ENCODE measurements at regions of chr4 and their contacts with region 1.

Region 1: GRCh38 chr4:74133786-74134499 is 24.0 kb upstream of the MTHFD2L start:
- DNase-seq: peak in 1 of 2 donors; percentile 91
- H3K4me3 ChIP-seq: no peak overlapping the region
- H3K27ac ChIP-seq: no peak overlapping the region
- H3K4me1 ChIP-seq: no peaks in the 10 kb centered on the region
- H3K27me3 ChIP-seq: no peaks in the 10 kb centered on the region
- CTCF ChIP-seq: peak; percentile 68 to 82 (median 70)

Region 2: DNA sequence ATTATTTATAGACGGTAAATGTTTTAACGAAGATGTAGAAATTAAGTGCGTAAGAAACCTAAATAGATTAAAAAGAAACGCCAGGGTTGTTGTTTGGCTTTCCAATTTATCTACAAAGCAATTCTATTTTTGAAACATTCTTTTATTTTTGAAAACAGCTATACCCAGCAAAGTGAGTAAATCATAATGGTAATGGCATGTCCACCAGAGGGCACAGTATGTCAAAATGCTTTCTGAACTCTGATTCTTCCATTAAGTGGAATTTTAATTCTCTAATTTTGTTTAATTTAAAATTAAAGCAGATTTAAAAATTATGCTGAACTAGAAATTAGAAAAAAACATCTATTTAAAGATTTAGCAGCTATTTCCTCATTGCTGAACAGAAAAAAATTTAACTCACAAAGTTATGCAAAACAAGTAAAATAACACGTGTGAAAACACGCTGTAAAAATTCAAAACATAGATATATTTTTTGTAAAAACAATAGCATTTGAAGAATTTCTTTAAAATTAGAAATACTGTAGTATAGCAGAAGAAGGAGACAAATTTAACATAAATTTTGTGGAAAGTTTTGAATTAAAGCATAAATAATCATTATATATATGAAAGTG is 540.2 kb before region 1 on chr4:
- intact Hi-C with region 1: loop called (anchors 10 kb)
- DNase-seq: no peak
- H3K4me3 ChIP-seq: no peak overlapping the region
- H3K27ac ChIP-seq: no peak overlapping the region
- H3K4me1 ChIP-seq: no peaks in the 10 kb centered on the region
- H3K27me3 ChIP-seq: no peaks in the 10 kb centered on the region
- CTCF ChIP-seq: peak in 2 of 3 experiments; percentile 15 to 52

Region 3: DNA sequence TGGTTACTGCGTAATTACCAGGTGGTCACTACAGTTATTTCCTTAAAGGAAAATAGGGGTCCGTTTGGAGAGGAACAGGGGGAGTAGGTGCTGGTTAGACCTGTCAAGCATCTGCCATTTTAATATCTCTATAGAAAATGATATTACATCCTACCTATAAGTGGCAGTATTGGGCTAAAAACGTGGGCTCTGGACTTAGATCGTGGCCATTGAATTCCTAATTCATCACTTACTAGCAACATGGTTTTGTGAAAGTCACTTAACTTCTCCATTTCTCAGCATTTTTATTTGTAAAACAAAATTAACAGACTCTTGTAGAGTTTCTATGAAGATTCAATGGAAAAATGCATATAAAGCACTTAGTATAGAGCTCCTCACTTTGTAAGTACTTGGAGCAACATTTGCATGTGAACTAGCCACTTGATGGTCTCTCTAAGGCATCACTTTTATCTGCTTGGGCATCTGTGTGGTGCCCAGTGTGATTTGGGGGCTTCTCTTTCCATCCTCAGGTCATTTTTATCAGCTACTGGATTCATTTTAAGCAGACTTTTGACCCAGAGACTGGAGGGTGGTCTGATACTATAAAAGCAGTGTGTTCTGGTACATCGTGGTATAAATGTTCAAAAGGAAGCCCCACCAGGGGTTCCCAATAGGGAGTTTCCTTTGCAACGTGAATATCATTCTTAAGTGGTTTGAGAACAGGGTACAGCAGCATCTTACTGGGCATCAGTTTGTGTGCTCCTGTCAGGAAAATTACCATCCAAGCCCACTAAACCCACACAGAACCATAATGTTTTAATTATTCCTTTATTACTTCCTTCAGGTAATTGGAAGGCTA is 471.0 kb before region 1 on chr4:
- intact Hi-C with region 1: loop called (anchors 2 kb)
- DNase-seq: no peak
- H3K4me3 ChIP-seq: no peak overlapping the region
- H3K27ac ChIP-seq: no peak overlapping the region
- H3K4me1 ChIP-seq: no peaks in the 10 kb centered on the region
- H3K27me3 ChIP-seq: no peaks in the 10 kb centered on the region
- CTCF ChIP-seq: peak; percentile 34 to 54 (median 49)

Region 4: GRCh38 chr4:73729534-73730165 is 404.3 kb before region 1 on chr4:
- intact Hi-C with region 1: loop called (anchors 2 kb)
- DNase-seq: peak in 1 of 2 donors; percentile 87
- H3K4me3 ChIP-seq: no peak overlapping the region
- H3K27ac ChIP-seq: no peak overlapping the region
- H3K4me1 ChIP-seq: no peaks in the 10 kb centered on the region
- H3K27me3 ChIP-seq: no peaks in the 10 kb centered on the region
- CTCF ChIP-seq: peak; percentile 58 to 77 (median 74)

Region 5: DNA sequence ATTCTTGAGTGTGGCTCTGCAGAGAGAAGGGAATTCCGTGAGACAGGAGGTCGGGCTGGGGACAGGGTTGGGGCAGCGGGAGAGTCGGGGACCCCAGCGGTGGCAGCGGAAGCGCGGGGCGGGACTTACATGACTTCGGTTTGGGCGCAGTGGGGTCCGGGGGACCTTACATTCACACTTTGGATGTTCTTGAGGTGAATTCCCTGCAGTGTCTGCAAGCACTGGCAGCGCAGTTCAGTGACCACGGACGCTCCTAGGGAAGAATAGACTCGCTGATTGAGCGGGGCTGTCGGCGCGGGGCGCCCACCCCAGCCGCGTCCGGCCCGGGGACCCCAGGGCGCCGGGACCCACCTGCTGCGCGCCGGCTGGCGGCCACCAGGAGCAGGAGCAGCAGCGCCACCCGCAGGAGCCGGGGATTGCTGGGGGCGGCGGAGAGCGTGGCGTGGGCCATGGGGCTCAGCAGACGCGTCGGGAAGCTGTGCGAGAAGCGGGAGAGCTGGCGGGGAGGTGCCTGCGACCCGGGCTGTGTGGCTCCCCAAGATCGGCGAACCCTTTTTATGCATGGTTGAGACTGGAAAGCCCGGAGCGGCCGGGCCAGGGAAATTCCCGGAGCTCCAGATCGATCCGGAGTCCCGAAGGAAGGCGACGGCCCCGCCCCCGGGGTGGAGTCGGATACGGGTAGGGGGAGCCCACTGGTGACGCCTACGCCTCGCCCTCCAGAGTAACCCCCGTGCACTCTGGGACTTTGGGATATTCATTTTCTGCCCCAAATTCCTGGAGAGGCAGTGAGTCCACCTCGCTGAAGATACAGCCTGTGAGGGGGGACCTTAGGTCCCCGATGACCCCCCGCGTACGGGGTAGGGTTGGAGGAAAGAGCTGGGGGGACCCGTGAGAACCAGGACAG is 95.5 kb before region 1 on chr4 and contains the start of gene CXCL3:
- intact Hi-C with region 1: loop called (anchors 5 kb)
- DNase-seq: peak in 1 of 2 donors; percentile 86
- H3K4me3 ChIP-seq: peak within 1 kb of the TSS; percentile 78 to 83
- H3K27ac ChIP-seq: peak within 1 kb of the TSS; percentile 22 to 46
- H3K4me1 ChIP-seq: peaks cover 0 to 3% of the 10 kb centered on the region in 2 donors
- H3K27me3 ChIP-seq: no peaks in the 10 kb centered on the region
- CTCF ChIP-seq: peak; percentile 18 to 41 (median 38)
- total RNA-seq, gene CXCL3: not detected

Region 6: GRCh38 chr4:74098450-74098994 is 35.4 kb before region 1 on chr4:
- intact Hi-C with region 1: loop called (anchors 5 kb)
- DNase-seq: no peak
- H3K4me3 ChIP-seq: peak overlapping the region; percentile 66 to 67
- H3K27ac ChIP-seq: no peak overlapping the region
- H3K4me1 ChIP-seq: peaks cover 4 to 6% of the 10 kb centered on the region in 2 donors
- H3K27me3 ChIP-seq: no peaks in the 10 kb centered on the region
- CTCF ChIP-seq: no peak

Region 7: GRCh38 chr4:74376888-74377483 is 243.0 kb after region 1 on chr4:
- intact Hi-C with region 1: no loop called
- DNase-seq: no peak
- H3K4me3 ChIP-seq: no peak overlapping the region
- H3K27ac ChIP-seq: no peak overlapping the region
- H3K4me1 ChIP-seq: no peaks in the 10 kb centered on the region
- H3K27me3 ChIP-seq: no peaks in the 10 kb centered on the region
- CTCF ChIP-seq: peak; percentile 42 to 71 (median 45)

Measured in ascending aorta (tissue), 2 donors.